ENCODE measurements at regions of chr1 and their contacts with region 1.

Region 1: DNA sequence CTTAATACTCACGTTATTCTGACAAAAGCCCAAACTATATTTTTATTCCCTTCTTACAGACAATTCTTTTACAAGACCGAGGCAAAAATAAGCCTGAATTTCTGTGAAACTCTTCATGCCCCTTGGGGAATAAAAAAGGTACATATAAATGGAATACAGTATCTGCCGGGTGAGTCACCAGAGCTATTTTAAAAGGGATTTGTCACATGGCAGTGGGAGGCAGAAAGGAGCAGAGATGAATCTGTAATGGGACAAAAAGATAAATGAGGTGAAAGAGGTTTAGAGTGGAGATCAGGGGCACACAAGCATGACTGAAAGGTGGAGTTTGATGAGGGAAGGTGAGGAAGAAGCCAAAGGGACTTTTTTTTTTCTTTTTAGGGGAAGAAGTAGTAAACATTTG is 8.8 kb downstream of the XCL1 start:
- ATAC-seq: peak in 7 of 8 experiments; percentile 60 to 98 (median 87)
- H3K4me3 ChIP-seq: no peak overlapping the region
- H3K27ac ChIP-seq: no peak overlapping the region
- H3K4me1 ChIP-seq: peaks cover 4 to 17% of the 10 kb centered on the region in 2 donors

Region 2: DNA sequence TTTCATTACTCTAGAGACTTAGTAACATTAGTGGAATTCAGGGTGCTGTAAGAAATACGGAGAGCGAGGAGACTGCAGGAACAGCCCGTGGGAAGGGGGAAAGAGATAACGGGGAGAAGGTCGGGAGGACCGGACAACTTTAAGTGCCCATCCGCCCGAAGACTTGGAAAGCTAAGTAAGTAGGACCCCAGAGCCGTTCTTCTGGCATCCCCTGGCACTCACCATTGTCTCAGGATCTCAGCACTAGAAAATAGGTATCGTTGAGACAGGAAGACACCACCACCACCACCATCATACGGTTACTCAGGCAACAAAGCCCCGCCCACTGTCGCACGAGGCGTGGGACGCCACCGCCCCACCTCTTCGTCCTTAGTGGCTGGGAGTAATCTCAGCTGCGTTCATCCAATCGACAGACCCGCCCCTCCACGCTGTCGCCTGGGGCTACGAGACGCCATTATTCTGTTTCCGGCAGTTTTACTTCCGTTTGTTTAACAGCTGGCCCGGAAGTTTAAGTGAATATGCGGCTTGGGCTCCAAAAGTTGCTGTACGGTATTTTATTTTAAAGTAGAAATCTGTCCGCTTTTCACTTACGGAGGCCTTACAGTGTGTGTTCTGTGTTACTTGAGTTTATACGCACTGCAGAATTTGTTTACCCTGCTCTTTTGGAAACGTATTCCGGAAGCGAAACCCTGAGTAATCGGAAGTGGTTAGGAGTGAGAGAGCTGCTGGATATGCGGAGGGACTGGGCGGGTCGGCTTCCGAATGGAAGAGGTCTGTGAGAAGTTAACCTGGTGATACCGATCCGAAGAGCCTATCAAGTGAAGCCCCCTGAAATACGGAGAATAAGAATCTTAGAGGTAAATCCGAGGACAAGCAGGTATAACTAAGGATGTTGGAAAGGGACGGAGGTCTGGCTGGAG is 782.6 kb after region 1 on chr1 and contains the starts of genes BLZF1 and NME7:
- in situ Hi-C with region 1: loop called in 1 of 9 experiments (anchors 25 kb)
- ATAC-seq: peak; percentile 89 to 99 (median 98)
- H3K4me3 ChIP-seq: peak within 1 kb of the TSS; percentile 55 to 82 (median 73)
- H3K27ac ChIP-seq: peak within 1 kb of the TSS; percentile 84 to 88
- H3K4me1 ChIP-seq: peaks cover 10 to 35% of the 10 kb centered on the region in 2 donors
- total RNA-seq, gene BLZF1: 24.8 to 71.0 (median 39.6) TPM
- total RNA-seq, gene NME7: 14.2 to 111 (median 71.9) TPM

Measured in motor neuron (in vitro differentiated cells).